ENCODE measurements at regions of chr1 and their contacts with region 1.

Region 1: GRCh38 chr1:201895913-201896807 is 7.5 kb downstream of the SHISA4 start:
- DNase-seq: peak; percentile 94

Region 2: GRCh38 chr1:201828820-201829774 is 67.1 kb before region 1 on chr1 and contains the start of gene IPO9:
- intact Hi-C with region 1: loop called (anchors 10 kb)
- DNase-seq: peak; percentile 97
- total RNA-seq, gene IPO9: 24.7 TPM

Region 3: GRCh38 chr1:201970334-201971159 is 74.4 kb after region 1 on chr1:
- intact Hi-C with region 1: loop called (anchors 1 kb)
- DNase-seq: no peak

Region 4: GRCh38 chr1:202135221-202135721 is 239.1 kb after region 1 on chr1:
- intact Hi-C with region 1: loop called (anchors 10 kb)
- DNase-seq: peak; percentile 80